ENCODE measurements at regions of chr22 and their contacts with region 1.

Region 1: GRCh38 chr22:37933711-37934376 is 19.6 kb downstream of the C22orf23 start:
- DNase-seq: peak; percentile 50 to 89 (median 71)
- ATAC-seq: peak; percentile 100
- H3K4me3 ChIP-seq: no peak overlapping the region
- H3K4me3 Mint-ChIP-seq: no peak overlapping the region
- H3K27ac ChIP-seq: no peak overlapping the region
- H3K27ac Mint-ChIP-seq: peak overlapping the region in 1 of 9 donors; percentile 7
- H3K4me1 ChIP-seq: peaks cover 0 to 4% of the 10 kb centered on the region in 2 donors
- H3K4me1 Mint-ChIP-seq: peaks cover 0 to 15% (median 8%) of the 10 kb centered on the region in 7 donors
- H3K27me3 ChIP-seq: no peaks in the 10 kb centered on the region
- H3K27me3 Mint-ChIP-seq: no peaks in the 10 kb centered on the region

Region 2: GRCh38 chr22:37817705-37818408 is 116.0 kb before region 1 on chr22:
- CTCF ChIA-PET with region 1: interaction called, 17 read pairs
- POLR2A ChIA-PET with region 1: no interaction called
- intact Hi-C with region 1: loop called (anchors 1 to 2 kb)
- DNase-seq: peak; percentile 44 to 92 (median 72)
- ATAC-seq: peak; percentile 92
- H3K4me3 ChIP-seq: peak overlapping the region; percentile 61
- H3K4me3 Mint-ChIP-seq: peak overlapping the region in 9 of 10 donors; percentile 34 to 74 (median 52)
- H3K27ac ChIP-seq: no peak overlapping the region
- H3K27ac Mint-ChIP-seq: no peak overlapping the region
- H3K4me1 ChIP-seq: peaks cover 10% of the 10 kb centered on the region in 2 donors
- H3K4me1 Mint-ChIP-seq: peaks cover 0 to 16% (median 11%) of the 10 kb centered on the region in 7 donors
- H3K27me3 ChIP-seq: no peaks in the 10 kb centered on the region
- H3K27me3 Mint-ChIP-seq: peaks cover 9 to 33% (median 20%) of the 10 kb centered on the region in 5 donors

Region 3: DNA sequence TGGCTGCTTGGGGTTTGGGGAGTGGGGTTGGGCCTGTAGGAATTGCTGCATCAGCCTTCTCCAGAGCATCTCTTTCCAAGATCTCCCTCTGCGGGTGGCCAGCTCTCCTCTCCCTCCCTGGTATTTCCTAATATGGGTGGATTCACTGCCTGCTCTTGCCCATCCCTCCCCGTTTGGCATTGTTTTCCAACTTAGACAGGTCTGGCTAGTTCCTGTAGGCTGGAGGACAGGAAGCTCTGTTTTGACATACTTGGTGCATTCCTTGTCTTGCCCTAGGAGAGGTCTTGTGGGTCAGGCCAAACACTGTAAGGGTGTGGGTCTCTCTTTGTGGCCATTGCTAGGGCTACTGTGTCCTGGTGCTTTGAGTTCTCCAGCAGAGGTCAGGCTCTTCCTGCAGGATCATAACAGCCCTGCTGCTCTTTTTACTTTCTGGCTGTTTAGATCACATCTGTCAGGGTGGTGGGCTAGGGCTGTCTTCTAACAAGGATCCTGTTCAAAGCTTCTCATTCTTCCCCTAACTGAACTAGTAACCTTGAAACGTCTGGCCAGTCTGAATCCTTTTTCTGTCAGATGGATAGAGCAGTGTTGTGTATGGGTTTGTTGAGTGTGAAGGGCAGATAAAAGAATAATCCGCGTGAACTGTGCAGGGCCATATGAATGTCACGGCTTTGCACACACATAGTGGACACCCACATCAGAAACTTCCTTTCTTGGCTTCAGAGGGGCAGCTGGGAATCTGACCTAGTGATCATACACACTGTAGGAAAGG is 46.0 kb before region 1 on chr22:
- CTCF ChIA-PET with region 1: interaction called, 3 read pairs
- POLR2A ChIA-PET with region 1: no interaction called
- intact Hi-C with region 1: loop called in 1 of 2 experiments (anchors 1 kb)
- DNase-seq: no peak
- ATAC-seq: peak; percentile 29
- H3K4me3 ChIP-seq: no peak overlapping the region
- H3K4me3 Mint-ChIP-seq: no peak overlapping the region
- H3K27ac ChIP-seq: no peak overlapping the region
- H3K27ac Mint-ChIP-seq: peak overlapping the region; percentile 39 to 86 (median 51)
- H3K4me1 ChIP-seq: no peaks in the 10 kb centered on the region
- H3K4me1 Mint-ChIP-seq: peaks cover 9 to 22% (median 16%) of the 10 kb centered on the region in 7 donors
- H3K27me3 ChIP-seq: no peaks in the 10 kb centered on the region
- H3K27me3 Mint-ChIP-seq: no peaks in the 10 kb centered on the region

Region 4: GRCh38 chr22:37905534-37906363 is 28.1 kb before region 1 on chr22 and contains the start of gene MICALL1:
- CTCF ChIA-PET with region 1: interaction called, 4 read pairs
- POLR2A ChIA-PET with region 1: interaction called, 10 read pairs
- intact Hi-C with region 1: loop called in 1 of 2 experiments (anchors 1 kb)
- DNase-seq: peak; percentile 39 to 82 (median 57)
- ATAC-seq: peak; percentile 90
- H3K4me3 ChIP-seq: peak within 1 kb of the TSS; percentile 47
- H3K4me3 Mint-ChIP-seq: peak within 1 kb of the TSS; percentile 69 to 92 (median 86)
- H3K27ac ChIP-seq: peak within 1 kb of the TSS; percentile 72
- H3K27ac Mint-ChIP-seq: peak within 1 kb of the TSS; percentile 79 to 90 (median 86)
- H3K4me1 ChIP-seq: peaks cover 0 to 9% of the 10 kb centered on the region in 2 donors
- H3K4me1 Mint-ChIP-seq: peaks cover 21 to 34% (median 26%) of the 10 kb centered on the region in 7 donors
- H3K27me3 ChIP-seq: no peaks in the 10 kb centered on the region
- H3K27me3 Mint-ChIP-seq: no peaks in the 10 kb centered on the region
- total RNA-seq, gene MICALL1: 22.2 to 40.0 (median 27.8) TPM

Region 5: GRCh38 chr22:37965940-37966664 is 32.3 kb after region 1 on chr22:
- CTCF ChIA-PET with region 1: no interaction called
- POLR2A ChIA-PET with region 1: interaction called, 3 read pairs
- intact Hi-C with region 1: loop called in 1 of 2 experiments (anchors 1 kb)
- DNase-seq: no peak
- ATAC-seq: no peak
- H3K4me3 ChIP-seq: no peak overlapping the region
- H3K4me3 Mint-ChIP-seq: no peak overlapping the region
- H3K27ac ChIP-seq: no peak overlapping the region
- H3K27ac Mint-ChIP-seq: no peak overlapping the region
- H3K4me1 ChIP-seq: no peaks in the 10 kb centered on the region
- H3K4me1 Mint-ChIP-seq: peaks cover 2 to 14% (median 5%) of the 10 kb centered on the region in 7 donors
- H3K27me3 ChIP-seq: no peaks in the 10 kb centered on the region
- H3K27me3 Mint-ChIP-seq: no peaks in the 10 kb centered on the region

Region 6: GRCh38 chr22:39703928-39704639 is 1770.2 kb after region 1 on chr22:
- CTCF ChIA-PET with region 1: no interaction called
- POLR2A ChIA-PET with region 1: no interaction called
- intact Hi-C with region 1: no loop called
- DNase-seq: no peak
- ATAC-seq: no peak
- H3K4me3 ChIP-seq: no peak overlapping the region
- H3K4me3 Mint-ChIP-seq: no peak overlapping the region
- H3K27ac ChIP-seq: no peak overlapping the region
- H3K27ac Mint-ChIP-seq: peak overlapping the region in 1 of 9 donors; percentile 62
- H3K4me1 ChIP-seq: no peaks in the 10 kb centered on the region
- H3K4me1 Mint-ChIP-seq: peaks cover 0 to 2% (median 0%) of the 10 kb centered on the region in 7 donors
- H3K27me3 ChIP-seq: no peaks in the 10 kb centered on the region
- H3K27me3 Mint-ChIP-seq: no peaks in the 10 kb centered on the region

Measured in naive thymus-derived CD4-positive, alpha-beta T cell (primary cell).